Posterior vena cava (tissue), 2 donors: ENCODE measurements at regions of chr14 and their contacts with region 1.

Region 1: DNA sequence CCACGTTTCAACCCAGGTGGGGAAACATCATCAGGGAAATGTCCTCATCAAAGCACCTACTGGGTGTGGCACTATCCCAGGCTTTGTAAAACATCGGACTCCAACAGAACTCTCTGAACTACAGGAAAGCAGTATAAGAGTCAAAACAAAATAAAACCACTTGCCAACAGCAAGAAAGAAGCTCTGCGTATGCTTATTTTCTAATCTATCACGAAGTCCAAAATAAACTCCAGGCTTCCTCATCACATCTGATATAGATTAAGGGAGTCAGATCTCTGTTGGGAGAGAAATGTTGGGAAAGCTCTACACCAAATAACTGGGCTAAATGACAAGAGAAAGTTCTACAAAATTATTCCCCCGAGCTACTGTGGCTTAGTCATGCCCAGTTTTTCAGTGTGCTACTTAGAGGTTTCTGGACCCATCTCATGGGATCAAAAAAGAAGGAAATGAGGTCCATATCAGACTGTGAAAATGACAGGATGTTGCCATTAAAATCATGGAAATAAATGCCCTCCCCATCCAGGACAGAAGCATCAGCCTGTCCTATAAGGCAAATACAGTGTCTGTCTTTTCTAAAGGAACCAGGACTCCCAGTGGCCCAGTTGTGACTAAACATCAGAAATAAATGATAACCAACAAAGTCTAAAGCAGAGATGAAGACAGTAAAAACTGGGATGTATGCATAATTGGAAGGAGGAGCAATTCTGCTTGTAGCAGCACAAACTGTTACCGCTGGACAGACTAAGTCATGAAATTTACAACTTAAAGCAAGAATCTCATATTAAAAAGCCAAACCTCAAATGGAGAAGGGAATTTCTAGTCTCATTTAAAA is 149.5 kb downstream of the STXBP6 start:
- DNase-seq: no peak

Region 2: DNA sequence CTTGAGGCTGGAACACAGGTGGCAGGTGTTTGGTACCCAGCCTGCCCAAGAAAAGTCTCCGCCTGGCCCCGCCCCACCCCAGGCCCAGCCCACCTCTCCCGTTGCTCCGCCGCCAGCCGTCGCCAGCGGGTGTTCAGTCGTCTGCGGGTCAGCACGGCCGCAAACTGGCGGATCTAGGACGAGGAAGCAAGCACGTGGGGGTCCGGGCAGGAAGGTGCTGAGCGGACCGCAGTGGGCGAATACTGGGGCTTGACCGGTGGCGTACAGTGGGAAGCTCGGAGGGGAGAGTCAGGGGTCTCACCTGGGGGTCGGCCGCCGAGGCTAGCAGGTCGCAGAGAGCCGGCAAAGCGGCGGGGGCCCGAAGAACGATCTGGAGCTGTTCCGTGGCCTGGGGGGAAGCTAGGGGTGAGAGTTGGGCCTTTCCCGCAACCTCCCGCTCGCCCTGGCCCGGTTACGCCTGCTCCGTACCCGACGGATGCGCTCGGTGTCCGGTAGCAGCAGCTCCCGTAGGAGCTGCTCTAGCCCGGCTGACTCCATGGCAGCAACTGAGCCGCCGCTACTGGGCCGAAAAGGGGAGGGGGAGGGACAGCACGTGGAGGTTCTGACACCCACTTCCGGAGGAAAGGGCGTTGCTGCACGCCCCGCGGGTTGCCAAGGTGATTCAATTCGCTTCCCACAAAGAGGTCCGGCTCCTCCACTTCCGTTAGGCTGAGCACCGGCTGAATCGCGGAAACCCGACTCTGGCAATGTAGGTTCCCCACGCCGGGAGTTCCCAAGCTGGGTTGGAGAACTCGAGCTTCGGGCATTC is 712.0 kb before region 1 on chr14 and contains the start of gene IPO4:
- intact Hi-C with region 1: no loop called
- DNase-seq: peak; percentile 99
- total RNA-seq, gene IPO4: 24.9 to 30.6 TPM

Region 3: DNA sequence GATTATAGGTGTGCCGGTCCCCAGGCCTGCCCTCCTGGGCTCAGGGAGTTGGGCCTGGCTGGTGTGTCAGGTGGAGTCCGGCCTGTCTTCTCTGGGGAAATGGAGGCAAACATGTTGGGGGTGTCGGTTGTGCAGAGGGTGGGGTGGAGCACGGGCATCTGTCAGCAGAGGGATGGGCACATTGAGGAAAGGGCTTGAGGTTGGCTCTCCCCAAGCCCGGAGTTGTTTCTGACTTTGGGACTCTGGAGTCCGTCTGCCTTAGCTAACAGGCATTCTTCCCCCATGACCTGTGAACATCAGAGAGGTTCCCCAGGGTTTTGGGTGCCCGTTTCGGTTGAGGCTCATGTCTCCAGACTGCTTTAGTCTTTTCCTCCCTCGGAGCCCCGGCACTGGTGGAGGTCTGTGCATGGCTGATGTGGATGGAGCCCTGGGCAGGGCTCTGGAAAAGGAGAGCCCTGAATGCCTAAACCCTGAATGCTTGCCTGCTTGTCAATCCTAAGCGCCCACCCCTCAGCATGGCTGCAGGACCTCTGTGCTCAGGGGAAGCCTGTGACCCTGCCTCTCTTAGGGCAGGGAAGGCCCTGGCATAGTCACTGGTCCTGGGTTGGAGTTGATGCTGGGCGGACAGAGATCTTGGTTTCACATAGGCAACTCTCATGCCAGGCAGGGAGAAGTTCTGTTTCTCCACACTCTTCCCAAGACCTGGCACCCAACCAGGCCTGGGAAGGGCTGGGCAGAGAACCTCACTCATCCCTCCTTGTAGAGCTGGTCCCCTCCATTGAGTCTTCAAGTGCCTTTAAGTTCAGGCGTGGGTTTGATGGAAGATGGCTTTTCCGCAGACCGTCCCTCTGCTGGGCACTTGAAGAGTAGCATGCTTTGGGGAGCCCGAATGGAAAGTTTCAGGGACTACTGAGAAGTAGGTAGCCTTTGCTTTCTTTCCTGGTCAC is 488.8 kb before region 1 on chr14:
- intact Hi-C with region 1: no loop called
- DNase-seq: no peak

Region 4: DNA sequence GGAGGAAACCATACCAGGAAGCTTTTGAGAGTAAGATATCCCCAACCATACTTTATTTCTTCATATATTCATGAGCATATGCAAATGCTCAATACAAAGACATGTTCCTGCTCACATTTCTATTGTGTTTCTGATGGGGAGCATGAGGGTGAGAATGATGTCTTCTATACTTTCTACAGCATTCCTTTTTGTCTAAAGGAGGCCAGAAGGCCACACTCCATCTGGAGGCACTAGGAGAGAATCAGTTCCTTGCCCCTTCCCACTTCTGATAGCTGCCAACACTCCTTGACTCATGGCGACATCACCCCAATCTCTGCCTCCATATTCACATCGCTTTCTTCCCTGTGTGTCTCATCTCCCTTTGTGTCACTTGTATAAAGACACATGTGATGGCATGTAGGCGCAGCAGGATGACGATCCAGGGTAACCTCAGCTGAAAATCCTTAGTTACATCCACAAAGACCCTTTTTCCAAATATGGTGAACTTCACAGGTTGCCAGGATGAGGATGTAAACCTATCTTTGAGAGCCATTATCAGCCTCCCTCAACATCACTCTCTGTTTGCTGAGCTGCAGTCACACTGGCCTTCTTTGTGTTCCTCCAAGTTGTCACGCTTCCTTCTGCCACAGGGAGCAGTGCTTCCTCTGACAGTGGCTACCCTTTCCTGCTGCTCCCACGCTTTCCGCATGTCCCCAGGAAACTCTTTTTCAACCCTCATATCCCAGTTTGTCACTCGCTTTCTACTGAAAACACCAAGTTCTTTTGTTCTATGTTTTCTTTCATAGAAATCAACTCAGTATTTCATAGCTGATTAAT is 52.6 kb after region 1 on chr14:
- intact Hi-C with region 1: loop called in 1 of 2 experiments (anchors 10 kb)
- DNase-seq: no peak